Activated CD4-positive, alpha-beta T cell treated with anti-CD3 and anti-CD28 coated beads for 36 hours (primary cell): ENCODE measurements at regions of chr13 and their contacts with region 1.

Region 1: DNA sequence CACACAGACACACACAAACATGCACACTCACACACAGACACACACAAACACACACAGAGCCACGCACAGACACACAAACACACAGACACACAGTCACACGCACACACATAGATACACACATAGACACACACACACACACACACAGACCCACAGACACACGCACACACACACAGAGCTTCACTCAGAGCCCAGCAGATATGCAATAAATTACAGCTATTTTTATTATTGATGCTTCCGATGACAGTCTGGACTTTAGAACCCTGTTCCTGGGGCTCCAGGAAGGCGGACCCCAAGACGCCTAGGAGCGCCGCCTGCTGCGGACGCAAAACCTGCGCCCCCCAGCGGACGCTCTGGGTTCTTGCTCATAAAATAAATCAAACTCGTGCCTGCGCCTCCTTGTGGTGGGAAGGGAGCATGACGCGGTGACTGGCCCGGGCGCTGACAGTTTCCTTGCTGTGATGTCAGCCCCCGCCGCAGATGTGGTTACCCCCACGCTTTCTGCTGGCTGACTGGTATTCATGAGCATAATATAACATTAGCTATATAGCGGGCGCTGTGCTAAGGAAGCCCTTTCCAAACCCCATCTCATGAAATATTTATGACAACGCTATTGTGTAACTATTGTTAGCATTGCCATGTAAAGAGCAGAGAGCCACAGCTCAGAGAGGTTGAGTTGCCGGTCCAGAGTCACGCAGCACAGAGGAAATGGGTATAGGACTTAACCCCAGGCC is 64.4 kb upstream of the TM9SF2 start:
- DNase-seq: peak; percentile 98
- ATAC-seq: peak; percentile 30
- H3K4me3 Mint-ChIP-seq: peak overlapping the region; percentile 0
- H3K27ac Mint-ChIP-seq: peak overlapping the region; percentile 45
- H3K4me1 Mint-ChIP-seq: peaks cover 60% of the 10 kb centered on the region
- H3K27me3 Mint-ChIP-seq: peaks cover 2% of the 10 kb centered on the region

Region 2: GRCh38 chr13:98397221-98397620 is 1039.6 kb before region 1 on chr13:
- CTCF ChIA-PET with region 1: no interaction called
- POLR2A ChIA-PET with region 1: no interaction called
- intact Hi-C with region 1: no loop called
- DNase-seq: no peak
- ATAC-seq: no peak
- H3K4me3 Mint-ChIP-seq: no peak overlapping the region
- H3K27ac Mint-ChIP-seq: no peak overlapping the region
- H3K4me1 Mint-ChIP-seq: no peaks in the 10 kb centered on the region
- H3K27me3 Mint-ChIP-seq: no peaks in the 10 kb centered on the region

Region 3: DNA sequence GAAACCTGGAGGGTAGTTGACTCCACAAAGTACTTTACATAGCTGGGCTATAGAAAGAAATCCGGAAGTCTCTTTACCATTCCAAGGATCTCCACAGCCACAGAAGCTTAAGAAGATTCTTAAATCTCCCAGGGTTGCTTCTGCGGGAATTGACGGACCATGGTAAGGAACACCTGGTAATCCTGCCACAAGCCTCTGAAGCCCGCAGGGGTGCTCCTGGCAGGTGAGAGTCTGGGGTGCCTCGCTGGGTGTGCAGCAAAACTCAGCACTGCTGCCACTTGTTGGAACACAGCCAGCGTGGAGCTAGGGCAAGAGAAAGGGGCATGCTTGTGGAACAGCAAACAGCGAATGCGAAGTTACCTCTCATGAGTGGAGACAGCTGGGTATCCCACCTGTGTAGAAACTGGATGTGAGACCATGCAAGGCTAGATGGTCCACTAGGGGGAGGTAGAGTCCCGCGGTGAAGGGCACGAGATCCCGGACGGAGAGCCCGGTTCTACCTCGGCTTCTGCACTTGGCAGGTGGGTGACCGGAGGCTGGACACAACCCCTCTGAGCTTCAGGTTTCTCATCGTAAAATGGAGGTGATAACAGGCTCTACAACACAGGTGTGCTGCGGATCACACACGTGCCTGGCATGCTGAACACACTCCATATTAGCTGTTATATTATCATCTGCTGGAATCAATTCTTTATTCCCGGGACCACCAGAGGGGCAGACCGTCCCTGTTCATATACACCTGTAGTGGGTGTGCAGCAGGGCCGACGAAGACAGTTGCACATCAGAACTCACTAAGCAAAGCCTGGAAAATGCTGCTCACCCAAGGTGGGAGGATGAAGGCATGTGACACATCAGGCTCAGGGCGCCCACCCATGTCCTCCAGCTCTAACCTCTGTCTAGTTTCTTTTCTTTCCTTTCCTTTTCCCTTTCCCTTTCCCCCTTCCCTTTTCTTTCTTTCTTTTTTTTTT is 260.3 kb before region 1 on chr13:
- CTCF ChIA-PET with region 1: interaction called, 8 read pairs
- POLR2A ChIA-PET with region 1: interaction called, 3 read pairs
- intact Hi-C with region 1: loop called (anchors 1 to 2 kb)
- DNase-seq: peak; percentile 86
- ATAC-seq: peak; percentile 91
- H3K4me3 Mint-ChIP-seq: peak overlapping the region; percentile 51
- H3K27ac Mint-ChIP-seq: no peak overlapping the region
- H3K4me1 Mint-ChIP-seq: peaks cover 41% of the 10 kb centered on the region
- H3K27me3 Mint-ChIP-seq: no peaks in the 10 kb centered on the region

Region 4: DNA sequence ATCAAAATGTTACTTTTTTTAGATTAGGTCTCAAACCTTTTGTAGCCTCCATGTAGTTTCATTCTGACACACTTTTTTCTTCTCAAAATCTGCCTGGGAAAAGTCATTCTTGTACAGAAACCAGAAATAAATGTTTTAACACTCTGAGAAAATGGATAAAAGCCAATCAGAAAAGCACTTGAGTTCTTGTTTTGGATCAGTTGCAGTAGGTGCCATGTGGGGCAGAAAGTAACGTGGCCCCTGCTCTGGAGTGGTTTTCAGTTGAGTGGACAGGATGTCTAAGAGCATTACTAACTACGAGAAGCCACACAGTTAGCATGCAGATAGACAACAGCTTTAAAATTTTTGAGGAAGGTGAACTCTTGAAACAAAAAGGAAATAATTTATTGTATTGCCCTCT is 148.8 kb before region 1 on chr13:
- CTCF ChIA-PET with region 1: interaction called, 18 read pairs
- POLR2A ChIA-PET with region 1: interaction called, 4 read pairs
- intact Hi-C with region 1: no loop called
- DNase-seq: peak; percentile 87
- ATAC-seq: peak; percentile 79
- H3K4me3 Mint-ChIP-seq: no peak overlapping the region
- H3K27ac Mint-ChIP-seq: peak overlapping the region; percentile 90
- H3K4me1 Mint-ChIP-seq: peaks cover 91% of the 10 kb centered on the region
- H3K27me3 Mint-ChIP-seq: no peaks in the 10 kb centered on the region

Region 5: GRCh38 chr13:99322297-99323103 is 114.4 kb before region 1 on chr13:
- CTCF ChIA-PET with region 1: interaction called, 16 read pairs
- POLR2A ChIA-PET with region 1: interaction called, 9 read pairs
- intact Hi-C with region 1: loop called (anchors 1 kb)
- DNase-seq: peak; percentile 66
- ATAC-seq: peak; percentile 78
- H3K4me3 Mint-ChIP-seq: peak overlapping the region; percentile 26
- H3K27ac Mint-ChIP-seq: peak overlapping the region; percentile 93
- H3K4me1 Mint-ChIP-seq: peaks cover 81% of the 10 kb centered on the region
- H3K27me3 Mint-ChIP-seq: no peaks in the 10 kb centered on the region

Region 6: DNA sequence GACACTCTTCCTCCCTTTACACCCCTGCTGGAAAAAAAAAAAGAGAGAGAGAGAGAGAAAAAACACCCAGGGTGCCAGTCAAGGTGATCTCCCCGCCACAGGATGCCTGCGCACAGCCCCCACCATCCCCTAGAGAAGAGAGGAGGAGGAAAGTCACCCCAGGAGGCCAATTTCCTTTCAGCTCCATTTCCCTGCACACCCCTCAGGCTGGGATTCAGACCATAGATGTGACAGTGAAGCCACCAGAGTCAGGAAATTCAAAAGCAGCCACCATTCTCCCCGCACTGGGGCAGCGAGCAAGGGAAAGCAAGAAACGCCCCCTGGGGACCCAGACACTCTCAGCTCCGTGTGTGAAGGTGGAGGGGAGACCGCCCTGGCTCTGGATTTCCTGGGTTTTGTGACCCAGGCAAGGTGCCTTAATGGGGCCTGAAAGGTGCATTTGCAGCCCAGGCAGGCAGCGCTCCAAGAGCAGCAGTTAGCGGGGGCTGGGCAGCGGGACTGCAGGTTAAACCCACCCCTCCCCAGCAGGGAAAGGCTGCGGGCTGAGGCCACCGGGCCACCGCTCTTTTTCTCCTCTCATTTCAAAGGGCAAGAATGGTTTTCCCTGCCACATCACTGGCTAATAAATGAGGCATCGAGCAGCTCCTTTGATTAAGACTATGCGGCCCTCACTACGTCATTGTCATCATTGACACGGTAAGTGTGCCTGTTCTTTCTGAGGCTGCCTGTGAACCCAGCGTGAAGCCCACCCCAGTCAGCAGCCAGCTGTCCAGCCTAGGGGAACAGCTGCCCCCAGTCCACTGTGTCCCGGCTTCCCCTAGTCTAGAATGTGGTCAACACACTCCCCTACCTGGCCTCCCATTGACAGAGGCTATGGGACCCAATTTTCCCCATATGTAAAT is 19.4 kb before region 1 on chr13:
- CTCF ChIA-PET with region 1: interaction called, 78 read pairs
- POLR2A ChIA-PET with region 1: interaction called, 13 read pairs
- intact Hi-C with region 1: loop called (anchors 1 kb)
- DNase-seq: peak; percentile 57
- ATAC-seq: peak; percentile 2
- H3K4me3 Mint-ChIP-seq: no peak overlapping the region
- H3K27ac Mint-ChIP-seq: no peak overlapping the region
- H3K4me1 Mint-ChIP-seq: peaks cover 62% of the 10 kb centered on the region
- H3K27me3 Mint-ChIP-seq: no peaks in the 10 kb centered on the region